ENCODE measurements at regions of chr11 and their contacts with region 1.

Region 1: GRCh38 chr11:118171269-118172062 is 5.0 kb downstream of the SCN2B start:
- DNase-seq: peak; percentile 27 to 87 (median 61)
- ATAC-seq: peak; percentile 84 to 90 (median 86)
- H3K4me3 ChIP-seq: no peak overlapping the region
- H3K4me3 Mint-ChIP-seq: no peak overlapping the region
- H3K27ac ChIP-seq: no peak overlapping the region
- H3K27ac Mint-ChIP-seq: no peak overlapping the region
- H3K4me1 ChIP-seq: peaks cover 0 to 9% of the 10 kb centered on the region in 2 experiments
- H3K4me1 Mint-ChIP-seq: peaks cover 0 to 2% (median 2%) of the 10 kb centered on the region in 3 donors
- H3K27me3 ChIP-seq: peaks cover 0 to 59% of the 10 kb centered on the region in 2 experiments
- H3K27me3 Mint-ChIP-seq: peaks cover 13 to 27% of the 10 kb centered on the region in 2 donors

Region 2: DNA sequence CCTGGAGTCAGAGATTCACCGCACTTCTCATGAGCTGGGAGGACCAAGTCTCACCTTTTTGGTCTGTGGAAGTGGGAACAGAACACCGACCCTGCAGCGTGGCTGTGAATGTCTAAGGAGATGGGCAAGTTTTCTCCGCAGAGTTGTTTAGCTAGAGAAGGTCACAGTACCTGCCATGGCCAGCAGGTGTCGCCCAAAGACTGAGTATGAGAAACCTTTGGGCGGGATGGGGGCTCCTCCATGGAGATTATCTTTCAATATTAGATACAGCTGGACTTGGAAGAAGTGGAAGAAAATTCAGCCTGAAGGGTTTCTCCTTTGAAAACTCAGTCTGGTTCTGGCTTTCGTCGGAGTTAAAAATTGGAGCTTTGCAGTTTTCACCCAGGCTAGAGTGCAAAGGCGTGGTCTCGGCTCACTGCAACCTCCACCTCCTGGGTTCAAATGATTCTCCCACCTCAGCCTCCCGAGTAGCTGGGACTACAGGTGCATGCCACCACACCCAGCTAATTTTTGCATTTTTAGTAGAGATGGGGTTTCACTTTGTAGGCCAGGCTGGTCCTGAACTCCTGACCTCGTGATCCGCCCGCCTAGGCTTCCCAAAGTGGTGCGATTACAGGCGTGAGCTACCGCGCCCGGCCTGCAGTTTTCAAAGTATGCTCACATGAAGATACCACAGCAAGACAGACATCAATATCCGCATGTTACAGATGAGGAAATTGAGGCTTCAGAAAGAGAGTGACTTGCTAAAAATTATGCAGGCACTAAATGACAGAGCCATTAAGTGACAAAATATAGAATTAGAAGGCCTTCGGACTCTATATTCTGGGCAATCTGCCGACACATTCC is 363.8 kb before region 1 on chr11:
- CTCF ChIA-PET with region 1: interaction called, 6 to 14 read pairs
- POLR2A ChIA-PET with region 1: no interaction called
- DNase-seq: peak in 33 of 35 experiments; percentile 33 to 87 (median 68)
- ATAC-seq: peak; percentile 53 to 81 (median 70)
- H3K4me3 ChIP-seq: no peak overlapping the region
- H3K4me3 Mint-ChIP-seq: no peak overlapping the region
- H3K27ac ChIP-seq: no peak overlapping the region
- H3K27ac Mint-ChIP-seq: no peak overlapping the region
- H3K4me1 ChIP-seq: peaks cover 0 to 15% of the 10 kb centered on the region in 2 experiments
- H3K4me1 Mint-ChIP-seq: peaks cover 3 to 12% (median 8%) of the 10 kb centered on the region in 3 donors
- H3K27me3 ChIP-seq: peaks cover 0 to 11% of the 10 kb centered on the region in 2 experiments
- H3K27me3 Mint-ChIP-seq: no peaks in the 10 kb centered on the region

Region 3: DNA sequence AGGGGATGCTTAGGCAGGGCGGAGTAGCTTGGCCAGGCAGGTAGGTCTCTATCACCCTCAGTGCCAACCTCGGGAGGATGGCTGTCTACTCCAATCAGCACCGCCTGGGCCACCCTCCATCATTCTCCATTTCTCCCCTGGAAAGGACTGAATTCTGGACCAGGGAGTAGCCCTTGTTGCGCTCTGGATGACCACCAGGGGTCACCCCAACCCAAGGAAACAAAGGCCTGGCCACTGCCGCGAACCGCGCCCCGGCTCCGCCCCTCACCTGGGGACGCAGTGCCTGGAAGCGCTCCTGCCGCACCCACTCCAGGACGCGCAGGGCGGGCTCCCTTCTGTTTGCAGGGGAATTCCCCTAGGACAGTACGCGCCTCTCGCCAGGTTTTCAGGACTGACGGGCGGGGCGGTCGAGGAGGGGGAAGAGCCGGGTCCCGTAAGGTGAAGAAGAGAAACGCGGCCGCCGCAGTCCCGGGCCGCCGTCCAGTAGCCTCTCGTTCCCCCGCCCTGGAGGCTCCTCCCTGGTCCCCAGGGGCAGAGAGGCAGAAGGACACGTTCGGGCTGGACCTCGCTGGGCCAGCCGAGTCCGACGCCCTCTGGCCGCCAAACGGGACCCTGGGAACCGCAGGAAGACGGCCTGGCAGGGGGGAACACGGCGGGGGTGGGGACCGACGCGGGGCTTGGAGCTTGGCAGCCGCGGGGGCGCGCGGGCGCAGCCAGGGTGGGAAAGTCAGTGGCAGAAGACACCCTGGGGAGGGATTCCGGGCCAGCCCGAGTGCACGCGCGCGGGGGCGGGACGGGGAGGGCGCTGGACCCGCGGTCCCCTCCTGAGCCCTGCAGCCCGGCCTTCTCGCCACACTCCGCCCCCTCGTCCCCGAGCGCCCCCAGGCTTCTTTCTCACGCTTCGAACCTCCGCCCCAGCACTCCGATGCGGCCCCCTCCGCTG is 25.9 kb before region 1 on chr11:
- CTCF ChIA-PET with region 1: interaction called in 1 of 2 experiments, 10 read pairs
- POLR2A ChIA-PET with region 1: no interaction called
- DNase-seq: peak; percentile 59 to 91 (median 79)
- ATAC-seq: peak; percentile 91 to 94 (median 93)
- H3K4me3 ChIP-seq: peak overlapping the region; percentile 53 to 64
- H3K4me3 Mint-ChIP-seq: peak overlapping the region; percentile 75 to 81 (median 77)
- H3K27ac ChIP-seq: no peak overlapping the region
- H3K27ac Mint-ChIP-seq: no peak overlapping the region
- H3K4me1 ChIP-seq: peaks cover 0 to 14% of the 10 kb centered on the region in 2 experiments
- H3K4me1 Mint-ChIP-seq: peaks cover 0 to 4% (median 3%) of the 10 kb centered on the region in 3 donors
- H3K27me3 ChIP-seq: peaks cover 0 to 63% of the 10 kb centered on the region in 2 experiments
- H3K27me3 Mint-ChIP-seq: peaks cover 50 to 62% of the 10 kb centered on the region in 2 donors